T-cell (primary cell): ENCODE measurements at regions of chr4 and their contacts with region 1.

Region 1: GRCh38 chr4:147822128-147822527 is 90.2 kb downstream of the ARHGAP10 start:
- DNase-seq: no peak
- ATAC-seq: no peak
- H3K4me3 ChIP-seq: no peak overlapping the region
- H3K4me3 Mint-ChIP-seq: no peak overlapping the region
- H3K27ac ChIP-seq: no peak overlapping the region
- H3K27ac Mint-ChIP-seq: no peak overlapping the region
- H3K4me1 ChIP-seq: no peaks in the 10 kb centered on the region
- H3K4me1 Mint-ChIP-seq: no peaks in the 10 kb centered on the region
- H3K27me3 ChIP-seq: no peaks in the 10 kb centered on the region
- H3K27me3 Mint-ChIP-seq: no peaks in the 10 kb centered on the region

Region 2: GRCh38 chr4:147749811-147750321 is 72.3 kb before region 1 on chr4:
- CTCF ChIA-PET with region 1: interaction called in 1 of 2 experiments, 10 read pairs
- POLR2A ChIA-PET with region 1: no interaction called
- DNase-seq: no peak
- ATAC-seq: no peak
- H3K4me3 ChIP-seq: no peak overlapping the region
- H3K4me3 Mint-ChIP-seq: no peak overlapping the region
- H3K27ac ChIP-seq: no peak overlapping the region
- H3K27ac Mint-ChIP-seq: no peak overlapping the region
- H3K4me1 ChIP-seq: no peaks in the 10 kb centered on the region
- H3K4me1 Mint-ChIP-seq: peaks cover 0 to 2% (median 0%) of the 10 kb centered on the region in 3 donors
- H3K27me3 ChIP-seq: no peaks in the 10 kb centered on the region
- H3K27me3 Mint-ChIP-seq: no peaks in the 10 kb centered on the region

Region 3: GRCh38 chr4:149790172-149790907 is 1968.2 kb after region 1 on chr4:
- CTCF ChIA-PET with region 1: interaction called in 1 of 2 experiments, 11 read pairs
- POLR2A ChIA-PET with region 1: no interaction called
- DNase-seq: no peak
- ATAC-seq: no peak
- H3K4me3 ChIP-seq: no peak overlapping the region
- H3K4me3 Mint-ChIP-seq: no peak overlapping the region
- H3K27ac ChIP-seq: no peak overlapping the region
- H3K27ac Mint-ChIP-seq: no peak overlapping the region
- H3K4me1 ChIP-seq: no peaks in the 10 kb centered on the region
- H3K4me1 Mint-ChIP-seq: no peaks in the 10 kb centered on the region
- H3K27me3 ChIP-seq: no peaks in the 10 kb centered on the region
- H3K27me3 Mint-ChIP-seq: peaks cover 0 to 4% of the 10 kb centered on the region in 2 donors